ENCODE measurements at regions of chr4 and their contacts with region 1.

Region 1: GRCh38 chr4:11869191-11869870 is 440.6 kb upstream of the HS3ST1 start:
- DNase-seq: no peak

Region 2: DNA sequence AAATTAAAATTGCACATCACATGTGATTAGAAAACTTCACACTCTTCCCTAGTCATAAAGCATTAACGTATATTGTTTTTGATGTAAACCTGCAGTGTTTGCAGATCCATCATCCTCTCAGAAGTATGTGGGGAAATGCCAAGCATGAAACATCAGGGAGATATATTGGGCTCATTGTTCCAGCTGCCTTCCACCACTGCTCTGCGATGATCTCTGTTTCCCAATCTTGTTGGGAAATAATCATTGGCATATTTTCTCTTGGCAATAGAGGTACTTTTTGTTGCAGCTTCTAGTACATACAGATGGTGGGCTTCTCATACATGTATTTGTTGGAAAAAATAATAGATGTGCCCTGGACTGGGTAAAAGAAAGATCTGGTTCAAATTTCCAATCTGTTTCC is 25.6 kb after region 1 on chr4:
- intact Hi-C with region 1: loop called in 1 of 2 experiments (anchors 2 kb)
- DNase-seq: no peak

Region 3: GRCh38 chr4:12231098-12231497 is 361.8 kb after region 1 on chr4:
- intact Hi-C with region 1: no loop called
- DNase-seq: no peak

Region 4: DNA sequence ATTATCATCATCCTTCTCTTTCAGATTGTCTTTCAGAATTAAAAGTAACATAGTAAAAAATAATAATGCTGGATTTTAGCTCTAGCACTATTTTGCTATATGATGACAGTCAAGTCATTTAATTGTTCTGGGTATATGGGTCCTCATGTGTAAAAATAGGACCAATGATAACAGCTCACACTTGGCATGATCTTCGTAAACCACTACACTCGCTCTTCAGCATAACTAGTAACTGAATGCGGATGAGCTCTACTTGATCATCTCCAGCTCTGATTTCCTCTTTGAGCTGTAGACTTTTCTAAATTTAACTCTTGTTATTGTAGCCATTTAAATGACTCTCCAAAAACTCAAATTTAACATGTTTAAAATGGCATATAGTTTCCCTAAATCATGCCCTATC is 391.1 kb after region 1 on chr4:
- intact Hi-C with region 1: no loop called
- DNase-seq: no peak

Measured in posterior vena cava (tissue), 2 donors.